Adrenal gland (tissue), 19 donors: ENCODE measurements at regions of chr10 and their contacts with region 1.

Region 1: DNA sequence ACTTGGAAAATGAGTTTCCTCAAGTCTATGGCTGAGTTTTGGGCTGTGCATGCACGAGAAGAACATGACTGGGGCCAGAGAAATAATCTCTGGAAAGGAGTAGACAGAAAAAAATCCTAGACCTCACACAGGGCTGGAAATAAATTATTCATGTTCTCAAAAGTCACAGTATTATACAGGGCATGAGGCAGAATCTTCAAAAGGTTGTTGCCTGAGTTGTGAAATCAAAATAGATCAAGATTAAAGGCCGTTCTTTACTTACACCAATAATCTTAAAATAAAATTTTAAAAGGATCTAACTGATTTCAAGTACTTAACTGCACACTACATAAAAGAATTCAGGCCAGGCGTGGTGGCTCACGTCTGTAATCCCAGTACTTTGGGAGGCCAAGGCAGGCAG is 14.1 kb upstream of the CREM start:
- DNase-seq: no peak
- H3K4me3 ChIP-seq: no peak overlapping the region
- H3K27ac ChIP-seq: no peak overlapping the region
- H3K4me1 ChIP-seq: no peaks in the 10 kb centered on the region
- H3K27me3 ChIP-seq: no peaks in the 10 kb centered on the region
- CTCF ChIP-seq: no peak
- POLR2A ChIP-seq: no peak

Region 2: GRCh38 chr10:34941471-34942357 is 170.9 kb before region 1 on chr10:
- intact Hi-C with region 1: no loop called
- DNase-seq: no peak
- H3K4me3 ChIP-seq: no peak overlapping the region
- H3K27ac ChIP-seq: no peak overlapping the region
- H3K4me1 ChIP-seq: peaks cover 5 to 10% of the 10 kb centered on the region in 2 donors
- H3K27me3 ChIP-seq: no peaks in the 10 kb centered on the region
- CTCF ChIP-seq: no peak
- POLR2A ChIP-seq: no peak

Region 3: GRCh38 chr10:35165136-35165535 is 52.6 kb after region 1 on chr10:
- intact Hi-C with region 1: no loop called
- DNase-seq: no peak
- H3K4me3 ChIP-seq: no peak overlapping the region
- H3K27ac ChIP-seq: no peak overlapping the region
- H3K4me1 ChIP-seq: no peaks in the 10 kb centered on the region
- H3K27me3 ChIP-seq: no peaks in the 10 kb centered on the region
- CTCF ChIP-seq: no peak
- POLR2A ChIP-seq: no peak

Region 4: DNA sequence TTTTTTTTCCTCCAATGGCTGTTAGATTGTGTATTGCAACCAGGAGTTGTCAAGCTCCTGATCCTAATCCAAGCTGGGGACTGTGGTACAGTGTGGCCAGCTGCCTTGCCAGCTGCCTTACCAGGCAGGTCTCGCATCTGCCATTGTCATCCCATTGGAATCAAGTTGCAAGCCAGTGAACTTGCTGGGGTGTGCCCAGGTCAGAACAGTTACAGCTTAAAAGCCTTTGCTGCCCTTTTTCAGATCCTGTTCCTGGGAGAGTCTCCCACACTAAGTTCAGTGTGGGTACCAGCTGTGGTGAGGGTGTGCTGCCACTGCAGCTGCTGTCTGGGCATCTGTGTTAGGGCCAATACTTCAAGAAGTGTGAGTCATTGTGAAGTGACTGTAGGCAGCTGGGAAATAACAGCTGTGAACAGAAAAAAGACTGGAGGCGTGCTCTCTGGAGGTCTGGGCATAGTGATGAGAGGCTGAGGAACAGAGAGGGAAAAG is 296.6 kb after region 1 on chr10:
- intact Hi-C with region 1: no loop called
- DNase-seq: peak in 6 of 7 donors; percentile 46 to 75 (median 66)
- H3K4me3 ChIP-seq: no peak overlapping the region
- H3K27ac ChIP-seq: peak overlapping the region in 2 of 5 donors; percentile 15 to 20
- H3K4me1 ChIP-seq: peaks cover 4 to 25% of the 10 kb centered on the region in 2 donors
- H3K27me3 ChIP-seq: no peaks in the 10 kb centered on the region
- CTCF ChIP-seq: no peak
- POLR2A ChIP-seq: no peak

Region 5: DNA sequence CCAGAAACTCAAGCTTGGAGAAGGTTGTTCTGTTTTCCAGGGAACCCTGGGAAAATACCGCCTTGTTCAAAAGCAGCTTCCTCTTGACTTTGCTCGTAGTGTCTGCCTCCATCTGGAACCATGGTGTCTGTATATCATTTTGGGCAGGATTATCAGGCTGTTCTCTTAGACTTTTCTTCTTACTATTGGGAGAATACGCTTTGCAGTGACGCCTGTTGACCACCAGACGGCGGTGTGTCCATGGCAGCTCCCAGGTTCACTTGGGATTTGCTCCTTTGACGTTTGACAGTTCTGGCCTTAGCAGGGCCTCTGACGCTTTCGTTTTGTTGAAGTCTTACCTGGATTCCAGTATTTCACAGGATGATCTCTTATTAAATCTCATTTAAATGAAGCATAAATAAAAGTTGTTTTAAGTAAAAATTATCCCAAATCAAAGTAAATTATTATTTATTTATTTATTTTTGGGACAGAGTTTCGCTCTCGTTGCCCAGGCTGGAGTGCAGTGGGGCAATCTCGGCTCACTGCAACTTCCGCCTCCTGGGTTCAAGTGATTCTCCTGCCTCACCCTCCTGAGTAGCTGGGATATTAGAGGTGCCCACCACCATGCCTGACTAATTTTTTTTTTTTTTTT is 450.8 kb after region 1 on chr10:
- intact Hi-C with region 1: loop called in 1 of 2 experiments (anchors 10 kb)
- DNase-seq: peak in 6 of 7 donors; percentile 36 to 79 (median 62)
- H3K4me3 ChIP-seq: no peak overlapping the region
- H3K27ac ChIP-seq: no peak overlapping the region
- H3K4me1 ChIP-seq: peaks cover 4 to 16% of the 10 kb centered on the region in 2 donors
- H3K27me3 ChIP-seq: no peaks in the 10 kb centered on the region
- CTCF ChIP-seq: peak; percentile 79 to 98 (median 92)
- POLR2A ChIP-seq: no peak